Heart left ventricle (tissue), 16 donors: ENCODE measurements at regions of chr3 and their contacts with region 1.

Region 1: GRCh38 chr3:61251174-61251972 is at the start of gene FHIT:
- DNase-seq: peak; percentile 96 to 97 (median 96)
- ATAC-seq: peak; percentile 99
- H3K4me3 ChIP-seq: peak within 1 kb of the TSS; percentile 47 to 84 (median 74)
- H3K27ac ChIP-seq: peak within 1 kb of the TSS; percentile 59 to 90 (median 84)
- H3K4me1 ChIP-seq: peaks cover 0 to 46% (median 10%) of the 10 kb centered on the region in 12 donors
- H3K27me3 ChIP-seq: no peaks in the 10 kb centered on the region
- CTCF ChIP-seq: peak in 1 of 12 donors; percentile 23
- POLR2A ChIP-seq: peak in 1 of 2 donors; percentile 54
- total RNA-seq, gene FHIT: 12.1 to 26.8 (median 18.5) TPM

Region 2: GRCh38 chr3:61157414-61157813 is 94.0 kb before region 1 on chr3:
- intact Hi-C with region 1: loop called in 1 of 10 experiments (anchors 5 kb)
- DNase-seq: no peak
- ATAC-seq: no peak
- H3K4me3 ChIP-seq: no peak overlapping the region
- H3K27ac ChIP-seq: no peak overlapping the region
- H3K4me1 ChIP-seq: peaks cover 0 to 20% (median 6%) of the 10 kb centered on the region in 12 donors
- H3K27me3 ChIP-seq: no peaks in the 10 kb centered on the region
- CTCF ChIP-seq: no peak
- POLR2A ChIP-seq: no peak

Region 3: GRCh38 chr3:61530355-61530754 is 279.0 kb after region 1 on chr3:
- intact Hi-C with region 1: loop called in 2 of 10 experiments (anchors 10 kb)
- DNase-seq: no peak
- ATAC-seq: no peak
- H3K4me3 ChIP-seq: no peak overlapping the region
- H3K27ac ChIP-seq: no peak overlapping the region
- H3K4me1 ChIP-seq: peaks cover 0 to 9% (median 0%) of the 10 kb centered on the region in 12 donors
- H3K27me3 ChIP-seq: no peaks in the 10 kb centered on the region
- CTCF ChIP-seq: peak; percentile 21 to 65 (median 44)
- POLR2A ChIP-seq: no peak